ENCODE measurements at regions of chr1 and their contacts with region 1.

Region 1: DNA sequence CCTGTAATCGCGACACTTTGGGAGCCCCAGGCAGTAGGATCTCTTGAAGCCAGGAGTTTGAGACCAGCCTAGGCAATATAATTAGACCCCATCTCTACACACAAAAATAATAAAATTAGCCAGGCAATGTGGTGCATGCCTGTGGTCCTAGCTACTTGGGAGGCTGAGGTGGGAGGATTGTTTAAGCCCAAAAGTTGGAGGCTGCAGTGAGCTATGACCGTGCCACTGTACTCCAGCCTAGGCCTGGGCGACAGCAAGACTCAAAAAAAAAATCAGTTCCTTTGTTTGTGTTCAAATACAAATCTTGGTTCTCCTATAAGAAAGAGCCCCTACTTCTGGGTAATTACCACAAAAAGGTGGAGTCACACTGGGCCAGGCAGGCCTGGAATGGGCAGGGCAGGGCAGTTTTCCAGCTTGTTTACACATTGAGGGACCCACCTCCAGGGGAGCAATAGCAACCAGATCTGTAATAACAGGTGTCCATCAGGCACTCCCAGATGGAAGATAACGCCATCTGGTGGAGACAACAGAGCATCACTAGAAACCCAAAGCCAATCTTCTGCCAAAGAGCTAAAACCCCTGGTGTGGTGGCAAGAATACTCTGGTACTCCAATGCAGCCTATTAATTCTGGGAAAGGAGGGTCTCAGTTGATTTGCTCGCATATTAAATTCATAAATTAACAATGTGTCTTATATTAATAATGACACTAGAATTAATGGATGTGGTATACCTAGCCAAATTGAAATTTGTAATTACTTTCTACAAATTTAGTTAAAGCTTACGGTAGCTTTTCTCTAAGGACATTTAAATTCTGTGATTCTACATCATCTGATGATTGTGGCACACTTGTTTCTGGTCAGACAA is 13.2 kb downstream of the PPP1R15B start:
- DNase-seq: peak; percentile 82
- H3K4me3 ChIP-seq: no peak overlapping the region
- H3K27ac ChIP-seq: no peak overlapping the region
- H3K4me1 ChIP-seq: no peaks in the 10 kb centered on the region
- H3K27me3 ChIP-seq: no peaks in the 10 kb centered on the region
- CTCF ChIP-seq: peak; percentile 85
- EP300 ChIP-seq: no peak
- RAD21 ChIP-seq: peak; percentile 79

Region 2: GRCh38 chr1:204139088-204139487 is 259.4 kb before region 1 on chr1:
- CTCF ChIA-PET with region 1: no interaction called
- POLR2A ChIA-PET with region 1: no interaction called
- DNase-seq: no peak
- H3K4me3 ChIP-seq: no peak overlapping the region
- H3K27ac ChIP-seq: no peak overlapping the region
- H3K4me1 ChIP-seq: no peaks in the 10 kb centered on the region
- H3K27me3 ChIP-seq: no peaks in the 10 kb centered on the region
- CTCF ChIP-seq: no peak
- EP300 ChIP-seq: no peak
- RAD21 ChIP-seq: no peak

Region 3: GRCh38 chr1:204151552-204152309 is 246.7 kb before region 1 on chr1 and contains the start of gene ETNK2:
- CTCF ChIA-PET with region 1: interaction called, 12 read pairs
- POLR2A ChIA-PET with region 1: no interaction called
- DNase-seq: peak; percentile 98
- H3K4me3 ChIP-seq: peak within 1 kb of the TSS; percentile 72 to 89
- H3K27ac ChIP-seq: peak within 1 kb of the TSS in 1 of 2 experiments; percentile 72; a peak in 1 of 4 replicates
- H3K4me1 ChIP-seq: peaks cover 3 to 19% of the 10 kb centered on the region in 2 experiments; a peak in 1 of 4 replicates
- H3K27me3 ChIP-seq: no peaks in the 10 kb centered on the region
- CTCF ChIP-seq: no peak
- EP300 ChIP-seq: no peak
- RAD21 ChIP-seq: no peak
- polyA plus RNA-seq, gene ETNK2: 16.1 and 20.1 TPM in 2 replicates

Region 4: GRCh38 chr1:204207136-204207616 is 191.3 kb before region 1 on chr1:
- CTCF ChIA-PET with region 1: interaction called, 15 read pairs
- POLR2A ChIA-PET with region 1: no interaction called
- DNase-seq: peak; percentile 86
- H3K4me3 ChIP-seq: no peak overlapping the region; a peak in 1 of 4 replicates
- H3K27ac ChIP-seq: no peak overlapping the region
- H3K4me1 ChIP-seq: peaks cover 0 to 3% of the 10 kb centered on the region in 2 experiments; a peak in 1 of 4 replicates
- H3K27me3 ChIP-seq: peaks cover 6% of the 10 kb centered on the region; the same call in 1 of the 2 replicates
- CTCF ChIP-seq: peak; percentile 90
- EP300 ChIP-seq: no peak
- RAD21 ChIP-seq: peak; percentile 50

Region 5: GRCh38 chr1:204257954-204258752 is 140.3 kb before region 1 on chr1:
- CTCF ChIA-PET with region 1: interaction called, 12 read pairs
- POLR2A ChIA-PET with region 1: interaction called, 4 read pairs
- DNase-seq: peak; percentile 88
- H3K4me3 ChIP-seq: no peak overlapping the region
- H3K27ac ChIP-seq: peak overlapping the region in 1 of 2 experiments; percentile 67; a peak in 2 of 4 replicates
- H3K4me1 ChIP-seq: peaks cover 0 to 28% of the 10 kb centered on the region in 2 experiments; a peak in 2 of 4 replicates
- H3K27me3 ChIP-seq: no peaks in the 10 kb centered on the region; the same call in 1 of the 2 replicates
- CTCF ChIP-seq: peak; percentile 73
- EP300 ChIP-seq: no peak
- RAD21 ChIP-seq: peak; percentile 80

Region 6: GRCh38 chr1:204377795-204378608 is 20.4 kb before region 1 on chr1:
- CTCF ChIA-PET with region 1: interaction called, 104 read pairs
- POLR2A ChIA-PET with region 1: interaction called, 3 read pairs
- DNase-seq: peak; percentile 81
- H3K4me3 ChIP-seq: peak overlapping the region; percentile 52 to 65
- H3K27ac ChIP-seq: no peak overlapping the region
- H3K4me1 ChIP-seq: peaks cover 0 to 20% of the 10 kb centered on the region in 2 experiments; a peak in 1 of 4 replicates
- H3K27me3 ChIP-seq: peaks cover 61% of the 10 kb centered on the region
- CTCF ChIP-seq: no peak
- EP300 ChIP-seq: no peak
- RAD21 ChIP-seq: no peak

Region 7: DNA sequence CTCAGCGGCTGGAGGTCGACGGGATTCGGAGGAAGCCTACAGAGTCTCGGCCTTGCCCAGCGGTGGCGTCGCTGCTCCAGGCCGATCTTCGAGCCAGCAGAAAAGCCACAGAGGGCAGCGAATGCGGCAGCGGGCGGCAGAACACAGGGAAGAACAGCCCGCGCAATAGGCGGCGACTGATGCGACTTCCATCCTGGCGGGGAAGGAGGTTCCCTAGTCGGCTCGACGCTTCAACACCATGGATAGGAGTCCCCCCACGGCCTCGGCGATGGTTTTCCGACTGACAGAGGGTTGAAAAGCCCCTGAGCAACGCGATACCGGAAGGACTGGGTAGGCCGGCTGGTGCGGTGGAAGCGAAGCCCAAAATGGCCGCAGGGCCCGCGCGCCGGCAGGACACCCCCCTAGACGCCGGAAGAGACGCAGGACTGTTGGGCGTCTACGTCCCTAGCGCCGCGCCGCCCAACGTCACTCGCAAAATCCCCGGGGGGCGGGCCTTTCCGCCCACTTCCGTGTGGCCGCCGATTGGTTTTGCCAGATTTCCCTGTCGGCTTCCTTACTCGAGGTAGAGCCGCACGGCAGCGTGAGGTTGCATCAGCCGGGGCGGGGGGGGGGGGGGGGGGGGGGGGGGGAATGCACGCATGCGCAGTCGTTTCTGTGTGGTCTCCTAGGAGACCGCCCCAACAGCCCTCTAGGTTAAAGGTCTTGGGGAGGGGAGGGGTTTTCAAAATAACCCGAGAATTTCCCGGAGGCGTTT is 13.2 kb after region 1 on chr1 and contains the start of gene PPP1R15B:
- CTCF ChIA-PET with region 1: interaction called, 60 read pairs
- POLR2A ChIA-PET with region 1: interaction called, 3 read pairs
- DNase-seq: peak; percentile 93
- H3K4me3 ChIP-seq: peak within 1 kb of the TSS; percentile 78 to 89
- H3K27ac ChIP-seq: peak within 1 kb of the TSS; percentile 97 to 98
- H3K4me1 ChIP-seq: peaks cover 0 to 14% of the 10 kb centered on the region in 2 experiments; a peak in 2 of 4 replicates
- H3K27me3 ChIP-seq: no peaks in the 10 kb centered on the region
- CTCF ChIP-seq: no peak
- EP300 ChIP-seq: no peak; a peak in 1 of 4 replicates
- RAD21 ChIP-seq: no peak
- polyA plus RNA-seq, gene PPP1R15B: 12.1 and 14.3 TPM in 2 replicates

Region 8: GRCh38 chr1:204453141-204453772 is 54.8 kb after region 1 on chr1:
- CTCF ChIA-PET with region 1: no interaction called
- POLR2A ChIA-PET with region 1: no interaction called
- DNase-seq: no peak
- H3K4me3 ChIP-seq: no peak overlapping the region
- H3K27ac ChIP-seq: no peak overlapping the region
- H3K4me1 ChIP-seq: no peaks in the 10 kb centered on the region; a peak in 2 of 4 replicates
- H3K27me3 ChIP-seq: no peaks in the 10 kb centered on the region
- CTCF ChIP-seq: no peak
- EP300 ChIP-seq: no peak
- RAD21 ChIP-seq: no peak

Region 9: DNA sequence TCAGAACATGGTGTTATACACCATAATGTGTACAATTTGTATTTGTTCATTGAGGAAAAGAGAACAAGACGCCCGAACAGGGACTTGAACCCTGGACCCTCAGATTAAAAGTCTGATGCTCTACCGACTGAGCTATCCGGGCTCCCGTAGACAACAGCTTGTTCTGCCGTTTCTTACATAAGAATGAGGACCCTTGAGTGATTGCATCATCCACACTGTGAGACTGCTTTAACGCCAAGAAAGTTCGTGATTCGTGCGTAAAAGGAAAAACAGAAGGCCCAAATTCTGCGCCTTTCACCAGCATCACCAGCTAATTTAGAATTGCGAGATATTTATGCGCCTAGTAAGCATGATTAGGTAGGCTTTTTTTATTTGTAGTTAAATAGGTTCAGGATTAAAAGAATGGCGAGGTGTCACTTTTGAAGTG is 108.5 kb after region 1 on chr1:
- CTCF ChIA-PET with region 1: interaction called, 24 read pairs
- POLR2A ChIA-PET with region 1: no interaction called
- DNase-seq: peak; percentile 43
- H3K4me3 ChIP-seq: peak overlapping the region; percentile 44 to 72
- H3K27ac ChIP-seq: peak overlapping the region; percentile 92 to 95
- H3K4me1 ChIP-seq: peaks cover 3 to 5% of the 10 kb centered on the region in 2 experiments; a peak in 2 of 4 replicates
- H3K27me3 ChIP-seq: no peaks in the 10 kb centered on the region
- CTCF ChIP-seq: no peak
- EP300 ChIP-seq: peak in 1 of 2 experiments; percentile 62; a peak in 1 of 4 replicates
- RAD21 ChIP-seq: no peak

Region 10: DNA sequence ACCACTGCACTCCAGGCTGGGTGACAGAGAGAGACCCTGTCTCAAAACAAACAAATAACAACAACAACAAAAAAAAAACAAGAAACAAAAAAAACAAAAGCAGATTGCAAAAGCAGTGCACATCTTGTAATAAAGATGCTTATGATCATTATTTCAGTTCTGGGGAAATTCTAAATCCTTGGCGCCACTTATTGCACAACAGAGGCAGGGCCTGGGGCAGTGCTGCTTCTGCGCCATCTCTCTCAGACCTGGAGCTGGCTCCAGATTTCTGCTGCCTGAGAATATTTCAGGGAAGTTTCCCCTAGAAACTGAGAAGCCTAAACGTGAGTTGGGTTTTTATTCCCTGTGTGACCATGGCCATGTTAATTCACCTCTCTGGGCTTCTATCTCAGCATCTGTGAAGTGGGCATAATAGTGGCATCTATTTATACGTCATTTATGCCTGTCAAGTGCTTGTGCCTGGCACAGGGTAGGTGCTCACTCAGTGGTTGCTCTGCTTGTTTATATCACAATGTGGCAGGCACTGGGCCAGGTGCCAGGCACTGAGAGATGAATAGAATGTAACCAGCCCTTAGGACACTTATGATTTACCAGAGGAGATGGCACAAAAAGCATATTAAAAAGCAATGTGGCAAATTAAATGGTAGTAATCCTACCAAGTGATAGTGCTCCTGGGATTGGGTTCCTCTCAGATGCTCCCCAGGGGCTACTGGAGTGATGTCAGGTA is 185.6 kb after region 1 on chr1:
- CTCF ChIA-PET with region 1: no interaction called
- POLR2A ChIA-PET with region 1: no interaction called
- DNase-seq: peak; percentile 75
- H3K4me3 ChIP-seq: no peak overlapping the region
- H3K27ac ChIP-seq: peak overlapping the region in 1 of 2 experiments; percentile 29; a peak in 1 of 4 replicates
- H3K4me1 ChIP-seq: peaks cover 0 to 15% of the 10 kb centered on the region in 2 experiments; a peak in 1 of 4 replicates
- H3K27me3 ChIP-seq: no peaks in the 10 kb centered on the region
- CTCF ChIP-seq: no peak
- EP300 ChIP-seq: peak in 1 of 2 experiments; percentile 91; a peak in 2 of 4 replicates
- RAD21 ChIP-seq: no peak

Region 11: GRCh38 chr1:204814181-204814884 is 415.9 kb after region 1 on chr1:
- CTCF ChIA-PET with region 1: no interaction called
- POLR2A ChIA-PET with region 1: no interaction called
- DNase-seq: no peak
- H3K4me3 ChIP-seq: no peak overlapping the region
- H3K27ac ChIP-seq: no peak overlapping the region
- H3K4me1 ChIP-seq: peaks cover 0 to 4% of the 10 kb centered on the region in 2 experiments; a peak in 1 of 4 replicates
- H3K27me3 ChIP-seq: peaks cover 26% of the 10 kb centered on the region
- CTCF ChIP-seq: no peak
- EP300 ChIP-seq: no peak
- RAD21 ChIP-seq: no peak

Measured in SK-N-SH (cell line).